IMR-90 (cell line): ENCODE measurements at regions of chr3 and their contacts with region 1.

Region 1: GRCh38 chr3:87053553-87053952 is 62.6 kb upstream of the VGLL3 start:
- DNase-seq: no peak
- ATAC-seq: no peak
- H3K4me3 ChIP-seq: no peak overlapping the region
- H3K27ac ChIP-seq: no peak overlapping the region
- H3K4me1 ChIP-seq: no peaks in the 10 kb centered on the region
- H3K27me3 ChIP-seq: no peaks in the 10 kb centered on the region
- CTCF ChIP-seq: no peak
- POLR2A ChIP-seq: no peak
- RAD21 ChIP-seq: no peak

Region 2: GRCh38 chr3:86958534-86958933 is 95.0 kb before region 1 on chr3:
- CTCF ChIA-PET with region 1: no interaction called
- POLR2A ChIA-PET with region 1: no interaction called
- dilution Hi-C with region 1: no loop called
- in situ Hi-C with region 1: no loop called
- intact Hi-C with region 1: no loop called
- DNase-seq: peak; percentile 89
- ATAC-seq: peak; percentile 79
- H3K4me3 ChIP-seq: no peak overlapping the region
- H3K27ac ChIP-seq: peak overlapping the region; percentile 1; the same call in 1 of the 2 replicates
- H3K4me1 ChIP-seq: peaks cover 17% of the 10 kb centered on the region
- H3K27me3 ChIP-seq: no peaks in the 10 kb centered on the region
- CTCF ChIP-seq: no peak
- POLR2A ChIP-seq: no peak
- RAD21 ChIP-seq: no peak

Region 3: DNA sequence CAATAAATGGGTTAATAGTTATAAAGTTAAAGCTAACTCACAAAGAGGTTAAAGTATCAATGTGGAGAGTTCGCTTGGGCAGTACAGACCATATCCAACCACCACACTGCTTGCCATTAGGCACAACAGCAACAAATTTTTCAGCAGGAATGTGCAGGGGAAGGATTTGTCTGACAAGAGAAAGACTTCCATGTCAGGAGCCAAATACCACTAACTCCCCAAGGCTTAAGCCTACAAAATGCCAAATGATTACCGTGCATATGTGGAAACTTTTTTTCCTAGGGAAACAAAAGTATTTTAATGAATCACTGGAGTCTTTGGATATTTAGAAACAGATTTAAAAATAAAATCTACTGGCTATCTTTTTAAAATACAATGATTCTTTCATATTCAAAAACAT is 70.7 kb before region 1 on chr3:
- CTCF ChIA-PET with region 1: no interaction called
- POLR2A ChIA-PET with region 1: interaction called, 14 read pairs
- dilution Hi-C with region 1: no loop called
- in situ Hi-C with region 1: no loop called
- intact Hi-C with region 1: no loop called
- DNase-seq: peak; percentile 68
- ATAC-seq: peak; percentile 42
- H3K4me3 ChIP-seq: no peak overlapping the region
- H3K27ac ChIP-seq: peak overlapping the region; percentile 45; the same call in 1 of the 2 replicates
- H3K4me1 ChIP-seq: peaks cover 15% of the 10 kb centered on the region
- H3K27me3 ChIP-seq: no peaks in the 10 kb centered on the region
- CTCF ChIP-seq: no peak
- POLR2A ChIP-seq: no peak
- RAD21 ChIP-seq: no peak